Calu3 (cell line): ENCODE measurements at regions of chr13 and their contacts with region 1.

Region 1: GRCh38 chr13:73248711-73249578 is 190.1 kb downstream of the KLF5 start:
- DNase-seq: peak; percentile 36
- H3K4me3 Mint-ChIP-seq: no peak overlapping the region
- H3K27ac Mint-ChIP-seq: peak overlapping the region; percentile 90
- H3K4me1 Mint-ChIP-seq: peaks cover 11% of the 10 kb centered on the region
- H3K27me3 Mint-ChIP-seq: no peaks in the 10 kb centered on the region
- CTCF ChIP-seq: no peak

Region 2: DNA sequence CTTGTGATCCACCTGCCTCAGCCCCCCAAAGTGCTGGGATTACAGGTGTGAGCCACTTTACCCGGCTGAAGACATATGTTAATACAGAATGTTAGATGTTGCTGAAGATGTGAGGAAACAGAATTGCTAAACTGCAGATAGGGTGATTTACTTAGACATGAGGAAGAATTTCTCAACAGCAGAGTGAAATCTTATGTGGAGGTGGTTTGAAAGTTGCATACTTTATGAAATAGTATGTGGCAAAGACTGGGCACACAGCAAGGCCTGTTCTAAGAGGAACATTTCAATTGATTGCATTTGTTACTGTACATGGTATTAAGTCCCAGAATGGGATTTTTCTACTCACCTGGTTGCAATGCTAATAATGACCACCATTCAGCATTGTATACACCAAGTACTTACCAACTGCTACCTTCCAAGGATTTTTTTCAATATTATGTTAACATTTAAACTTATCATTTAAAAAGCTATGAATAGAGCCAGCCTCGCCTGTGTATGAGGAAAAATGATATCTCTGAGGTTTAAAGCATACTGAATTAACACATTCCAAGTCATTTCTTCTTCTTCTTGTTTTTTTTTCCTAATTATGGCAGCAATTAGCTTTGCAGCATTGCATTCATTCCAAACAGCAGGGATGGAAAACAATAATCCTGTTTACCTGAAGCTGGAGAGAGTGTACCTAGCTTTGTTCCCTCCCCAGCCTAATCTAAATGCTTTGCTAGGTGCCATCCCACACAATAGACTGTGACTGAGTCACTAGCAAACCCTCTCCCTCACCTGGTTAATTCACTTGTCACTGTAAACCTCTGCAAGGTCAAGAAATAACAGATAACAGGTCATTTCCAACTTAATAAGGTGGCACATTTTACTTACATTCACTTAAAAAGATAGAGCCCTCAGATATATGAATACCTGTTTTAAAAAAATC is 209.5 kb before region 1 on chr13:
- CTCF ChIA-PET with region 1: no interaction called
- intact Hi-C with region 1: no loop called
- DNase-seq: no peak
- H3K4me3 Mint-ChIP-seq: no peak overlapping the region
- H3K27ac Mint-ChIP-seq: no peak overlapping the region
- H3K4me1 Mint-ChIP-seq: no peaks in the 10 kb centered on the region
- H3K27me3 Mint-ChIP-seq: no peaks in the 10 kb centered on the region
- CTCF ChIP-seq: no peak

Region 3: DNA sequence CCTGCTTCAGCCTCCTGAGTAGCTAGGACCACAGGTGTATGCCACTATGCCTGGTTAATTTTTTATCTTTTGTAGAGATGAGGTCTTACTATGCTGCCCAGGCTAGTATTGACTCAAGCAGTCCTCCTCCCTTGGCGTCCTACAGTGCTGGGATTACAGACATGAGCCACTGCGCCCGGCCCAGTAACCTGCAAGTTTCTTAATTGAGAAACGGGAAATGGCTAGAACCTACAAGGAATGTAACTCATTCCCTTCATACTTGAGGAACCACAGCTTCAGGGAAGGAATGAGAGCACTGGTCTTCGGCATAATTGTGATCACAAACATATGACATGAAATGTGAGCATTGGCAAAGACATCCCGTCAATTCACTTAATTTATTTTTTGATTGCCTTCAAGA is 33.1 kb before region 1 on chr13:
- CTCF ChIA-PET with region 1: interaction called, 3 read pairs
- intact Hi-C with region 1: loop called (anchors 2 kb)
- DNase-seq: peak; percentile 55
- H3K4me3 Mint-ChIP-seq: peak overlapping the region; percentile 14
- H3K27ac Mint-ChIP-seq: peak overlapping the region; percentile 79
- H3K4me1 Mint-ChIP-seq: peaks cover 24% of the 10 kb centered on the region
- H3K27me3 Mint-ChIP-seq: no peaks in the 10 kb centered on the region
- CTCF ChIP-seq: no peak